ENCODE measurements at regions of chr1 and their contacts with region 1.

Region 1: GRCh38 chr1:43035821-43036741 is 77.4 kb upstream of the SLC2A1 start:
- DNase-seq: no peak
- H3K27ac ChIP-seq: 0 out of 2 replicates have a peak overlapping the region, but pooled peaks have one; percentile 3
- CTCF ChIP-seq: no peak

Region 2: GRCh38 chr1:43082740-43083139 is 46.7 kb after region 1 on chr1:
- CTCF ChIA-PET with region 1: no interaction called
- POLR2A ChIA-PET with region 1: interaction called, 16 read pairs
- DNase-seq: no peak
- H3K27ac ChIP-seq: no peak overlapping the region
- CTCF ChIP-seq: no peak